Activated CD8-positive, alpha-beta T cell treated with anti-CD3 and anti-CD28 coated beads, Interleukin-2, amount 10 ng/mL, durations not matched to agents 7 days and 5 days (primary cell): ENCODE measurements at regions of chr4 and their contacts with region 1.

Region 1: DNA sequence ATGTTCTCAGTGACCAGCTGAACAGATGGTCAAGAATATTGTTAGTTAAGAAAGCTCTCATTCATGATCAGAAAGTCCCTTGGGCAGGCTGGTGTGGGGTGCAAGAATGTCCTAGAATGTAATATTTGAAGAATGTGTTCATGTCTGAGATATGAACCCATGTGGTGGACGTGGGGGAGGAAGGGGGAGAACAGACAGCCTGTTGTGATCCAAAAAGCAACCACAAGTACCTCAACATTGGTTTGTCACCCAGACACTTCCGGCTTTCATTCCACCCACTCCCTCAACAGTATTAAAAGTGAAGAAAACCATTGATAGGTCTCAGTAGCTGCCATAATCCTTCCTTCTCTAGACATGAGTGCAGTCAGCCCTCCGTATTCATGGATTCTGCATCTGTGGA is 82.2 kb downstream of the MAML3 start:
- DNase-seq: peak; percentile 88
- ATAC-seq: peak; percentile 85
- H3K4me3 Mint-ChIP-seq: peak overlapping the region; percentile 55
- H3K27ac Mint-ChIP-seq: peak overlapping the region; percentile 85
- H3K4me1 Mint-ChIP-seq: peaks cover 58% of the 10 kb centered on the region
- H3K27me3 Mint-ChIP-seq: peaks cover 14% of the 10 kb centered on the region

Region 2: GRCh38 chr4:140153718-140154571 is 82.1 kb after region 1 on chr4 and contains the start of gene MAML3:
- CTCF ChIA-PET with region 1: interaction called, 11 read pairs
- POLR2A ChIA-PET with region 1: interaction called, 16 read pairs
- DNase-seq: peak; percentile 89
- ATAC-seq: peak; percentile 41
- H3K4me3 Mint-ChIP-seq: peak within 1 kb of the TSS; percentile 90
- H3K27ac Mint-ChIP-seq: peak within 1 kb of the TSS; percentile 79
- H3K4me1 Mint-ChIP-seq: peaks cover 39% of the 10 kb centered on the region
- H3K27me3 Mint-ChIP-seq: peaks cover 14% of the 10 kb centered on the region
- total RNA-seq, gene MAML3: 4.0 to 4.1 TPM

Region 3: GRCh38 chr4:140213116-140213515 is 141.3 kb after region 1 on chr4:
- CTCF ChIA-PET with region 1: no interaction called
- POLR2A ChIA-PET with region 1: no interaction called
- DNase-seq: no peak
- ATAC-seq: no peak
- H3K4me3 Mint-ChIP-seq: no peak overlapping the region
- H3K27ac Mint-ChIP-seq: no peak overlapping the region
- H3K4me1 Mint-ChIP-seq: no peaks in the 10 kb centered on the region
- H3K27me3 Mint-ChIP-seq: peaks cover 17% of the 10 kb centered on the region

Region 4: DNA sequence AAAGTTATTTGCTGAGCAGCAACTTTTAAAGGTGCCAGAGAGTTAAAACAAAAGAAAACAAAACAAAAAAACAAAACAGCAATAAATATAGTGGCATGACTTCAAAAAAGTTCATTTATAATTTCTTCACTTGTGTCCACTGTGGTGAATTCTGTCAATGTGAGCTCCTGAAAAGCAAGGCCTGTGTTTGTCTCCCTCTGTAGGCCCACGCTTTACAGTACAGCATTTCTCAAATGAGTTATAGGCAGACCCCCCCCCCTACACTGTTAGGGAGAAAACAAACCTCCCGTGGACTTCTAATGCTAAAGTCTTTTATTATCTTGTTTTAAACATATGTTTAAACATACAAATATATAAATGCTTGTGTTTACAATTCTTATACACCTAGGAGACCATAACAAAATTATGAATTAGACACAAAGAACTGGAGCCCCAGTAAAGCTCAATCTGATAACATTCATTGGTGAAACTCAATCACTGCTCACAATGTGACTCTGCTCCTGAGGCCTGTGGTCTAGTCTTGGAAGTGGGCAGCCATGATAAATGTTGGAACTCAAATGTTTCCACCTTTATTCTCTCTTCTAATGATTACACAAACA is 254.7 kb after region 1 on chr4:
- CTCF ChIA-PET with region 1: no interaction called
- POLR2A ChIA-PET with region 1: no interaction called
- DNase-seq: peak; percentile 28
- ATAC-seq: no peak
- H3K4me3 Mint-ChIP-seq: no peak overlapping the region
- H3K27ac Mint-ChIP-seq: no peak overlapping the region
- H3K4me1 Mint-ChIP-seq: peaks cover 10% of the 10 kb centered on the region
- H3K27me3 Mint-ChIP-seq: peaks cover 20% of the 10 kb centered on the region